ENCODE measurements at regions of chr20 and their contacts with region 1.

Region 1: DNA sequence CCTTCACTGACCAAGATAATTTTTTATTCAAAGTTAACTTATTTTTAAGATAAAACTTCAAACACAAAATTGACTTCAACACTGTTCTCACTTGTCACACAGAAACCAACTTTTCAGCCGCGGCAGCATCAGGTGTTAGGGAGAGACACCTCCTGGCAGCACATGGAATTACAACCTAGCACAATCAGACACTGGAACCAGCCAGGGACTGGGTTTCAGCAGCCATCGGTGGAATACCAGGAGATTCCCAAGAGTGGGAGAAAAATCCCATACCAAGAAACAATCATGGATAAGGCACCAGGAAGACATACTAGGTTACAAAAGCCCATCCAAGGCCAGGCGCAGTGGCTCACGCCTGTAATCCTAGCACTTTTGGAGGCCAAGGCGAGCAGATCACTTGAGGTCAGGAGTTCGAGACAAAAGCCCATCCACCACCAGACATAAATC is 70.0 kb downstream of the SNX5 start:
- DNase-seq: peak; percentile 71 to 83
- ATAC-seq: peak; percentile 80

Region 2: GRCh38 chr20:17682103-17682888 is 216.3 kb before region 1 on chr20 and contains the start of gene RRBP1:
- intact Hi-C with region 1: loop called in 1 of 2 experiments (anchors 5 kb)
- DNase-seq: peak; percentile 97 to 99
- ATAC-seq: peak; percentile 75
- total RNA-seq, gene RRBP1: 357 to 460 TPM

Region 3: DNA sequence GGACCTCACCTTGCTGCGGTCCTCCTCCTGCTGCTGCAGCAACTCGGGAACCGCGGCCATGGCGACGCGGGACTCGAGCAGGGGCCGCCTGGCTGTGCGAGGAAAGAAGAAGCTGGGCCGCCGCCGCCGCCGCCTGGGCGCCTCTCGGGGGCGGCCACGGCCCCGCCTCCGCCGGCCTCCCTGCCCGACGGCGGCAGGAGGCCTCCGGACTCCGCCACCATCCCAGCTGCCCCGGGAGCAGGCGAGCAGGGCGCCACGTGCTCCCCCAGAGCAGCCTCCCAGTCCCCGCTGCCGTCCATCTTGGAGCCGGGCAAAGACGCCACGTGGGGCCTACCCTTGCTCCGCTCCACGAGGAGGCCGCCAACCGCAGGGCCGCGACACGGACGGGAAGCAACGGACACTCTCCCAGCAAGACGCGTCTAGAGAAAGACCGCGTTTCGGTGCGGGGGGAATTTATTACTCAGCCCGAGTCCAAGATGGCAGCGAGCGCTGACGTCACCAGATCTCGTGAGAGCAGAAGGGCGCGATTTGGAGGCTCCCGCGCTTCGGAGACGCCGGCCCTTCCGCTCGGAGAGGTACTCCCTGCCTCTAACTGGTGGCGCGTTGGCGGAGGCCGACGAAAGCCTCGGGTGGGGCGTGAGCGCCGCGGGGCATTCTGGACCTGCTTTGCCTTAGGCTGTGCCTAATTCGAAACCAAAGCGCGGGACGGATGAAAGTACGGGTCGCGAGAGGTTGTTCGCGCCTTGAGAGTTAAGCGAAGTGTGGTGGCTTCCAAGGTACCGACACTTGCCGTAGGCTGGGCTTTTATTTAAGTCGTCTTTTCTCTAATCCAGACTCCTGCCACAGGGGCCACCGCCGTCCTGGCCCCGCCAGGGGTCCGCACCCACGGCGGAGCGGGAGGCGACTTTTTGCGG is 70.1 kb after region 1 on chr20 and contains the starts of genes MGME1 and SNX5:
- intact Hi-C with region 1: no loop called
- DNase-seq: peak; percentile 99 to 100
- ATAC-seq: peak; percentile 81
- total RNA-seq, gene MGME1: 17.1 to 22.0 TPM
- total RNA-seq, gene SNX5: 95.3 to 98.4 TPM